CD8-positive, alpha-beta T cell (primary cell): ENCODE measurements at regions of chr12 and their contacts with region 1.

Region 1: GRCh38 chr12:121773011-121773777 is 20.3 kb downstream of the RHOF start:
- DNase-seq: peak; percentile 63 to 88 (median 80)
- ATAC-seq: peak; percentile 90
- H3K4me3 ChIP-seq: no peak overlapping the region
- H3K4me3 Mint-ChIP-seq: no peak overlapping the region
- H3K27ac ChIP-seq: peak overlapping the region in 1 of 2 experiments; percentile 32
- H3K27ac Mint-ChIP-seq: peak overlapping the region; percentile 57
- H3K4me1 ChIP-seq: peaks cover 29% of the 10 kb centered on the region
- H3K4me1 Mint-ChIP-seq: peaks cover 16% of the 10 kb centered on the region
- H3K27me3 ChIP-seq: no peaks in the 10 kb centered on the region
- H3K27me3 Mint-ChIP-seq: no peaks in the 10 kb centered on the region
- CTCF ChIP-seq: peak; percentile 82

Region 2: DNA sequence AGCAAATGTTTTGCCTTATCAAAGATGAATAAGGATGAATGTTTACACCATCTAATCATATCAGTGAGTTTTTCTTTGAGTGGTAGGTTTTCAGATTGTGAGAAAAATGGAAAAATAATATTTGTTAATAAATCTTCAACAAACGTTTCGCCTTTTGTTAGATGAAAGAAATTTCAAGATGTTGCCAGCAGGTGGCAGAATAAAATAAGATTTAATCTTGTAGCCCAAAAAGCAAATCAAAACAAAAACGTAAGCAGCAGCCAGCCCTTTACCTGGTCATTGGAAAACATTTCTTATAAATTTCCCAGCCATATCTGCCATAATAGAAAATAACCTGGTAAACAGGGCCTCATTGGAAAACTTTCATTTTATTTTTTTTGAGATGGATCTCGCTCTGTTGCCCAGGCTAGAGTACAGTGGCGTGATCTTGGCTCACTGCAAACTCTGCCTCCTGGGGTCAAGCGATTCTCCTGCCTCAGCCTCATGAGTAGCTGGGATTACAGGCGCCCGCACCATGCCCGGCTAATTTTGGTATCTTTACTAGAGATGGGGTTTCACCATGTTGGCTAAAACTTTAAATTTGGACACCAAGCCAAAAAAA is 76.0 kb before region 1 on chr12:
- CTCF ChIA-PET with region 1: interaction called, 148 read pairs
- POLR2A ChIA-PET with region 1: no interaction called
- intact Hi-C with region 1: loop called in 1 of 2 experiments (anchors 1 kb)
- DNase-seq: peak in 4 of 9 experiments; percentile 18 to 76 (median 59)
- ATAC-seq: peak; percentile 51
- H3K4me3 ChIP-seq: no peak overlapping the region
- H3K4me3 Mint-ChIP-seq: no peak overlapping the region
- H3K27ac ChIP-seq: no peak overlapping the region
- H3K27ac Mint-ChIP-seq: no peak overlapping the region
- H3K4me1 ChIP-seq: no peaks in the 10 kb centered on the region
- H3K4me1 Mint-ChIP-seq: peaks cover 2% of the 10 kb centered on the region
- H3K27me3 ChIP-seq: no peaks in the 10 kb centered on the region
- H3K27me3 Mint-ChIP-seq: no peaks in the 10 kb centered on the region
- CTCF ChIP-seq: peak; percentile 68